Endothelial cell of umbilical vein (primary cell): ENCODE measurements at regions of chr12 and their contacts with region 1.

Region 1: GRCh38 chr12:104769144-104769561 is 188.9 kb downstream of the SLC41A2 start:
- DNase-seq: no peak
- H3K4me3 ChIP-seq: no peak overlapping the region
- H3K27ac ChIP-seq: no peak overlapping the region
- H3K4me1 ChIP-seq: no peaks in the 10 kb centered on the region
- H3K27me3 ChIP-seq: peaks cover 2% of the 10 kb centered on the region in 2 experiments
- CTCF ChIP-seq: no peak
- POLR2A ChIP-seq: no peak

Region 2: GRCh38 chr12:104782296-104782695 is 13.1 kb after region 1 on chr12:
- CTCF ChIA-PET with region 1: interaction called, 14 read pairs
- POLR2A ChIA-PET with region 1: no interaction called
- dilution Hi-C with region 1: no loop called
- intact Hi-C with region 1: no loop called
- DNase-seq: no peak
- H3K4me3 ChIP-seq: no peak overlapping the region
- H3K27ac ChIP-seq: no peak overlapping the region
- H3K4me1 ChIP-seq: no peaks in the 10 kb centered on the region
- H3K27me3 ChIP-seq: peaks cover 4 to 9% of the 10 kb centered on the region in 2 experiments
- CTCF ChIP-seq: no peak
- POLR2A ChIP-seq: no peak

Region 3: DNA sequence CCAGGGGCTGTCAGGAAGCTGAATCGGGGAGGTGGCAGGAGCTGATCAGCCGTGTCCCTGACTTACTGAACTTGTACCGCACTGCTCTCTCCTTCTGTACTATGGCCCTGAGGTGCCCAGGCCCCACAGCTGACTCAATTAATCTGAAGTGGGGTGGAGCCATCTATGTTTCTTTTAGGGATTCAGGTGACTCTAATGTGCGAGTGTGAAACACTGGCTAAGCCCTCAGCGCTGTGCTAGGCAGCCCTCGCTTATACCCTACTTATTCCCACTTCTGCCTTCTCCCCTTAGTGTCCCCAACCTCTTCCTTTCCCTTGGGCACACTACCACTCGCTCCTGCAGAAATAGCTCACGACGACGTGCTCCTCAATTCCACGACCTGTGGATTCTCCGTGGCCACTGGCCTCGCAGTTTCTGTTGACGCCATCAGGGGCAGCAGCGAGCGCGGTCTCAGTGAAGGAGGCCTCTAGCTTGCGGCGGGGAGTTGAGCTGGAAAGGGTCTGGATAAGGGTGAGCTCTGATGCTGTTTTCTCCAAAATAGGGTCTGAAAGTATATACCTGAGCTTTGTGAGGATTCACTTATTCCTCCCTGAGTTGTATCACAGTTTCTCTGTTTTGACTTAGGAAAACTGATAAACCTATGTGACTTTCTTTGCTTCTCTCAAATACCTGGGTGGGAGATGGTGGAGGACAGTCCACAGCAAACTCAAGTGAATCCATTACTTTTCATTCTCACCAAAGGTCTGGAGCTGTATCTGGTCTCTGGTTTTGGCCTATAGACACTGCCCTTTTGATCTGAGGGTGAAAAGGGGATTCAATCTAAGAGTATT is 21.4 kb after region 1 on chr12:
- CTCF ChIA-PET with region 1: interaction called, 15 read pairs
- POLR2A ChIA-PET with region 1: no interaction called
- dilution Hi-C with region 1: no loop called
- intact Hi-C with region 1: no loop called
- DNase-seq: peak; percentile 24
- H3K4me3 ChIP-seq: no peak overlapping the region
- H3K27ac ChIP-seq: no peak overlapping the region
- H3K4me1 ChIP-seq: no peaks in the 10 kb centered on the region
- H3K27me3 ChIP-seq: no peaks in the 10 kb centered on the region
- CTCF ChIP-seq: peak; percentile 81 to 83
- POLR2A ChIP-seq: no peak

Region 4: GRCh38 chr12:104910196-104910840 is 141.2 kb after region 1 on chr12:
- CTCF ChIA-PET with region 1: no interaction called
- POLR2A ChIA-PET with region 1: no interaction called
- dilution Hi-C with region 1: no loop called
- intact Hi-C with region 1: no loop called
- DNase-seq: no peak
- H3K4me3 ChIP-seq: no peak overlapping the region
- H3K27ac ChIP-seq: no peak overlapping the region
- H3K4me1 ChIP-seq: no peaks in the 10 kb centered on the region
- H3K27me3 ChIP-seq: no peaks in the 10 kb centered on the region
- CTCF ChIP-seq: no peak
- POLR2A ChIP-seq: no peak